ENCODE measurements at regions of chrX and their contacts with region 1.

Region 1: DNA sequence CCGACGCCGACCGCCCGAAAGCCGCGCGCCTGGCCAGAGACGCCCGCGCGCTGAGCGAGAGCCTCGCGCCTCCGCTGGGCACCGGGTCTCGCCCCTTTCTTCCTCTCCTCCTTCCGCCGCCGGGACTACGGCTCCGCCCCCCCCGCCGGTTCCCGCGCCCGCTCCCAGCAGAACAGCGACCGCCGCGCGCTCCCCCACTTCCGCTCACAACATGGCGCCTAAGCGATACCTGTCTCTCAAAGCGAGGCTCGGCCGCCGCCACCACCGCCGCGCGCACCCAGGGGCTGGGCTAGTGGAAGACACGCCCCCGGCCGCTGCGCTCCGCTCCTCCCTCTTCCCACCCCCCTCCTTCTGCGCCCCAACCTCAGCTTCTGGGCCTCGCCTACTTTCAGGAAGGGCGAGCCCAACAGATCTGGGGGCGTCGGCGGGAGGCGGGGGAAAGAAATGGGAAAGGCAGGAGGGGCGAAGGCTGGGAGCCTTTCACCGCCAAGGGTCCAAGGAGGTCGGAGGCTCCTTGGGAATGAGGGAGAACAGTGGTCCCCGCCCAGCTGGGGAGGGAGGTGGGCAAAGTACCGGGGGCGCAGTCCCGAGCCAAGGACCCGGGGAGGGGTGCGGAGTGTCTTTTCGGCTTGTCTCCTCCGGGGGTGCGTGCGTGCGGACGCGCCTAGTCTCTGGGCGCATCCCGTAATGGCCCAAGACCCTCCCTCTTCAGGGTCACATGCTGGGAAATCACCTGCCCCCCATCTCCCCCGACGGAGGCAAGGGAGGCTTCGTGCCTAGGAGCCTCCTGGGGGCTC is at the start of gene RPS6KA3:
- DNase-seq: peak; percentile 83 to 91 (median 88)
- ATAC-seq: peak; percentile 93
- H3K4me3 ChIP-seq: peak within 1 kb of the TSS; percentile 84
- H3K4me3 Mint-ChIP-seq: peak within 1 kb of the TSS; percentile 89 to 98 (median 95)
- H3K27ac ChIP-seq: peak within 1 kb of the TSS; percentile 77
- H3K27ac Mint-ChIP-seq: peak within 1 kb of the TSS; percentile 89 to 95 (median 91)
- H3K4me1 ChIP-seq: peaks cover 0 to 5% of the 10 kb centered on the region in 2 donors
- H3K4me1 Mint-ChIP-seq: peaks cover 0 to 27% (median 20%) of the 10 kb centered on the region in 7 donors
- H3K27me3 ChIP-seq: no peaks in the 10 kb centered on the region
- H3K27me3 Mint-ChIP-seq: peaks cover 0 to 21% (median 0%) of the 10 kb centered on the region in 5 donors
- total RNA-seq, gene RPS6KA3: 59.9 to 77.9 (median 72.6) TPM

Region 2: DNA sequence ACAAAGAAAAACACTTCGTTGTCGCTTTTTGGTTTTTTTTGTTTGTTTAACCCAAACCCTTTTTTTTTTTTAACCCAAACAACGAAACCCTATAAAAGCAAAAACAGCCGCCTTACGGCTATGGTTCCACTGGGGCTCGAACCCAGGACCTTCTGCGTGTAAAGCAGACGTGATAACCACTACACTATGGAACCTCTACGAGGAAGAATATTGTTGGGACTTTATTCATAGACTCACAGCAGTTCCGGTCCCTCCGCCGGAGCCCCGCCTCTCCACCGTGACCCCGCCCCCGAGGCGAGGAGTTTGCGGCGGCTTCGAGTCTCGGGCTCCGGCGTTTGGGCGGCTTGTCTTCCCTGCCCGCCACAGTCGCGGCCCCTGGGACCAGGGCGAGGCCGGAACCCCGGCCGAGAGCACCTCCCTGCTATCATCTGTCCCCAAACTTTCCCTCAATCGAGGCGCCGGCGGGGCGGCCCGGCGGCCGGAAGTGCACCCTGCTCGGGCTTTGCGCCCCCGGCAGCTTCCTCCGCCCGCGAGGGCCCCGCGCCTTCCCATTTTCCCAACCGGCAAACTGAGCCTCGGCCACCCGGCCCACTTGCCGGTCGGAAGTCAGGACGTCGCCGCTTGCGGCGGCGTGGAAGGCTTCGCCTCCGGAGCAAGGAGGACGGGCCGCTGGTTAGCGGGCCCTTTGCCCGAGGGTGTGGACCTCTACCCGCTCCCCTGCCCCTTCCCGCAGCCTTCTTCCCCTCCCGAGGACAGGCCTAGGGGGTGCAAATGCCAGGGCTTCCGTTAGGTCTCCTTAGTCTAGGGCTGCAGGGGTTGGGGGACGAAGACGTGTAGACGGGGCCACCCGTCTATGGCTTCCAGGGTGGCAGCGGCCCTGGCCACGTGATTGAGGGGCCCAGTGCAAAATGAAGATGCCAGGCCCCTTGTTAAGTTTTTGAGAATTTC is 1591.9 kb before region 1 on chrX:
- CTCF ChIA-PET with region 1: no interaction called
- POLR2A ChIA-PET with region 1: no interaction called
- intact Hi-C with region 1: loop called in 1 of 2 experiments (anchors 10 kb)
- DNase-seq: peak; percentile 76 to 89 (median 87)
- ATAC-seq: peak; percentile 96
- H3K4me3 ChIP-seq: peak overlapping the region; percentile 63
- H3K4me3 Mint-ChIP-seq: peak overlapping the region; percentile 74 to 87 (median 80)
- H3K27ac ChIP-seq: peak overlapping the region; percentile 82
- H3K27ac Mint-ChIP-seq: peak overlapping the region; percentile 71 to 95 (median 85)
- H3K4me1 ChIP-seq: no peaks in the 10 kb centered on the region
- H3K4me1 Mint-ChIP-seq: peaks cover 0 to 15% (median 8%) of the 10 kb centered on the region in 7 donors
- H3K27me3 ChIP-seq: no peaks in the 10 kb centered on the region
- H3K27me3 Mint-ChIP-seq: no peaks in the 10 kb centered on the region

Region 3: DNA sequence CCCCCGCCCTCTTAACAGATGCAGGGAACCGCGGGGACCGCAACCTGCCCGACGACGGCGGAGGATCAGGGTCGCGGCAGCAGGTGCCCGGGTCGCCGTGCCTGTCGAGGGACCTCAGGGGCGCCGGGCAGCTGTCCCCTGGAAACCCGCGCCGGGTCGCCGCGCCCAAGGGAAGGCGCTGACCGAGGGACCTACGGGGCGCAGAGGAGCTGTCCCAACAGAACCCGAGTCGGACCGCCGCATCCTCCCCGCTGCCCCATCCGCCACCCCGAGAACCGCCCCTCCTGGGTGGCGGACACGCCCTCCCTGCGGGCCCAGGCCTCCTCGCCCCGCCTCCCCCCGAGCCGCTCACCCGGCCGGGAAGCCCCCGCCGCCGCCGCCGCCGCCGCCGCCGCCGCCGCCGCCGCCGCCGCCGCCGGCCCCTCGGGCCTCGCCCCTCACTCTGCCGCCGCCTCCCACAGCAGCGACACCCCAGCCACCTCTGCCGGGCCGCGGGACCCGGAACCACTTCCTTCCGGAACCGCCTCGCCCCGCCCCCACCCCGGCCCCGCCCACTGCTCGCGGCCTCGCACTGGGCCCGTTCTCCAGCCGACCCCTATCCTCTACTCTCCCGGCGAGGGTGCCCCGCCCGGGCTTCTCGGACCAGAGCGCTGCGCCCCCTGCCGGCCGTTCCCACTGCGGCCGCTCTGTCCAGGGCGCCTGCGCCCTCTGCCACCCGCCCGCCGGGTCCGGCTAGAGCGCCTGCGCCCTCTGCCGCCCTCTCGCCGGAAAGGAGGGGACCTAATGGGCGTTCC is 276.3 kb before region 1 on chrX and contains the start of gene BCLAF3:
- CTCF ChIA-PET with region 1: no interaction called
- POLR2A ChIA-PET with region 1: no interaction called
- intact Hi-C with region 1: loop called (anchors 2 to 5 kb)
- DNase-seq: peak; percentile 64 to 91 (median 71)
- ATAC-seq: peak; percentile 94
- H3K4me3 ChIP-seq: peak within 1 kb of the TSS; percentile 51
- H3K4me3 Mint-ChIP-seq: peak within 1 kb of the TSS; percentile 82 to 96 (median 90)
- H3K27ac ChIP-seq: peak within 1 kb of the TSS; percentile 71
- H3K27ac Mint-ChIP-seq: peak within 1 kb of the TSS; percentile 79 to 98 (median 92)
- H3K4me1 ChIP-seq: no peaks in the 10 kb centered on the region
- H3K4me1 Mint-ChIP-seq: peaks cover 7 to 30% (median 19%) of the 10 kb centered on the region in 7 donors
- H3K27me3 ChIP-seq: no peaks in the 10 kb centered on the region
- H3K27me3 Mint-ChIP-seq: no peaks in the 10 kb centered on the region
- total RNA-seq, gene BCLAF3: 6.2 to 14.1 (median 11.7) TPM

Region 4: DNA sequence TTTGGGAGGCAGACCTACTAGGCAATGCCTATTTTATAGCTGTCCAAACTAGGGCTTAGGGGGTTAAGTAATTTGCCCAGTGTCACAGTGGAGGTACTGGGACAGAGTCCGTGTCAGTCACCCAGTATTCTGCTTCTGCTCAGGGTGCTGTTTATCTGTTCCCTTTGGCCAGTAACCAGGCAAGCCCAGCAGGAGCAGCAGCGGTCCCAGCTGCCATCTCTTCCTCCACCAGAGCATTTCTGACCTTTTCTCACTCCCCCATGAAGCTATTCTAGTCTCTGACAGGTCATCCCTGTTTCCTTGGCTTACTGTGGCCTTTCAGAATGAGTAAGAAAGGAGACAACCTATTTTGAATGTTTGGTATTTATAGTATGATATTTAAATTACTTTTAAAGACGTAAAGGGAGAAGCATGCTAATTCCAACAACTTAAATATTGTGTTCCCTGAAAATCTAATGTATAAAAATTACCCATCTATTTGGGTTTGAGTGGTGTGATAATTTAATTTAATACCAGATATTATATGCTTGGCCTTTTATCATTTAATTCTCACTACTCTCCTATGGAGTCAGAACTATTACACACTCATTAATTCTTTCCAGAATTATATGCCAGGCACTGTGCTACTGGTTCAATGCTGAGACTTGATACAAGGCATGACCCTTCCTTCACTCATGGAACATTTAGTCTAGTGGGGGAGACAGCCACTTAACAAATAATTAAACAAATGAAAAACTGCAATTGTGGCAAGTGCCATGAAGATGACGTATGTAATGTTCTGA is 60.9 kb before region 1 on chrX:
- CTCF ChIA-PET with region 1: no interaction called
- POLR2A ChIA-PET with region 1: no interaction called
- intact Hi-C with region 1: no loop called
- DNase-seq: no peak
- ATAC-seq: no peak
- H3K4me3 ChIP-seq: no peak overlapping the region
- H3K4me3 Mint-ChIP-seq: peak overlapping the region in 1 of 10 donors; percentile 7
- H3K27ac ChIP-seq: no peak overlapping the region
- H3K27ac Mint-ChIP-seq: peak overlapping the region in 4 of 9 donors; percentile 36 to 88 (median 56)
- H3K4me1 ChIP-seq: peaks cover 4 to 13% of the 10 kb centered on the region in 2 donors
- H3K4me1 Mint-ChIP-seq: peaks cover 13 to 55% (median 53%) of the 10 kb centered on the region in 7 donors
- H3K27me3 ChIP-seq: no peaks in the 10 kb centered on the region
- H3K27me3 Mint-ChIP-seq: no peaks in the 10 kb centered on the region

Region 5: DNA sequence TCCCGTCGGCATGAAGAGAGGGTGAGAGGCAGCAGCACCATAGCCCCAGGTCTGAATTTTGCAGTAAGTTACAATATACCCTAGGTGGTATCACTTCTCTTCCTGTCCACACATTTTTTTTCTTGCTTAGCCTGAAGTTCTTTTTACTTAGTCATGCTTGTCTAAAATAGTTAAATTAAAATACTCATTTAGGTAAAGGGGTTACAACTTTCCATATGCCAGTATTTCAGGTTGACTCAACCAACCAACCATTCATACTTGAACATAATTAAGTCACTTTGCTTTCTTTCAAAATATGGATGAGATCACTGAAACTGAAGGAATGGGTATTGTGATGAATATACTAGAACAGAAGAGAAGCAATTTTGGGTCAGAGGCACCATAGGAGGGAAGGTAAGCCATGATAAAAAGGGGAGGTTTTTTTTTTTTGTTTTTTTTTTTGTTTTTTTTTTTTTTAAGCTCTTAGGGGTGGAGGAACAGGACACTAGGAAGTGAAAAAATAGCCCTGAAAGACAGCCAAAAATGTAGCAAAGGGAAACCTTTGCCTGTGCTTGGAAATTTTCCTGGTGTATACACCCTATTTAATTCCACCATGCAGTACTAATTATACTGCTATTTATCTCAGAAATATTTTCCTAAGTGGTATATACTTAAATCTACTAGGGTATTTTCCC is 42.1 kb before region 1 on chrX:
- CTCF ChIA-PET with region 1: no interaction called
- POLR2A ChIA-PET with region 1: no interaction called
- intact Hi-C with region 1: no loop called
- DNase-seq: no peak
- ATAC-seq: no peak
- H3K4me3 ChIP-seq: no peak overlapping the region
- H3K4me3 Mint-ChIP-seq: peak overlapping the region in 1 of 10 donors; percentile 14
- H3K27ac ChIP-seq: no peak overlapping the region
- H3K27ac Mint-ChIP-seq: peak overlapping the region in 6 of 9 donors; percentile 19 to 76 (median 42)
- H3K4me1 ChIP-seq: no peaks in the 10 kb centered on the region
- H3K4me1 Mint-ChIP-seq: peaks cover 10 to 78% (median 48%) of the 10 kb centered on the region in 7 donors
- H3K27me3 ChIP-seq: no peaks in the 10 kb centered on the region
- H3K27me3 Mint-ChIP-seq: no peaks in the 10 kb centered on the region

Region 6: DNA sequence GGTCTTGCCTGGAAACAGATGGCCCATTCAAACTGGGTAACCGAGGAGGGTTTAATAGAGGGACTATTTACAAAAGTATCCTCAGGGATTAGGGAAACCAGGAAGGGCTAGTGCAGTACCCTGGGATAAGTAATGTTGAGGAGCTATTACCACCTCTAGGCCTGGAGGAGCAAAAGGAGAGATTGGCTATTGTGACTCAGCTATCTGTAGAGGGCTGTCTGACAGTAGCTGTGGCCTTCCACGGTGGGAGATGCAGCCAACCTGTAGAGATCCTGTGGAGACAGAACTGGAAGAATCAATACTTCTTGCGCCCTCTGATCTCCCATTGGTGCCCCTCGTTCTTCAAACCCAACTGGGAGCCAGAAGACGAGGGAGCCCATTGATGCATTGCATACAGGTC is 33.8 kb after region 1 on chrX:
- CTCF ChIA-PET with region 1: no interaction called
- POLR2A ChIA-PET with region 1: no interaction called
- intact Hi-C with region 1: loop called in 1 of 2 experiments (anchors 5 kb)
- DNase-seq: no peak
- ATAC-seq: no peak
- H3K4me3 ChIP-seq: no peak overlapping the region
- H3K4me3 Mint-ChIP-seq: no peak overlapping the region
- H3K27ac ChIP-seq: no peak overlapping the region
- H3K27ac Mint-ChIP-seq: no peak overlapping the region
- H3K4me1 ChIP-seq: no peaks in the 10 kb centered on the region
- H3K4me1 Mint-ChIP-seq: peaks cover 0 to 12% (median 8%) of the 10 kb centered on the region in 7 donors
- H3K27me3 ChIP-seq: no peaks in the 10 kb centered on the region
- H3K27me3 Mint-ChIP-seq: peaks cover 0 to 23% (median 0%) of the 10 kb centered on the region in 5 donors

Region 7: DNA sequence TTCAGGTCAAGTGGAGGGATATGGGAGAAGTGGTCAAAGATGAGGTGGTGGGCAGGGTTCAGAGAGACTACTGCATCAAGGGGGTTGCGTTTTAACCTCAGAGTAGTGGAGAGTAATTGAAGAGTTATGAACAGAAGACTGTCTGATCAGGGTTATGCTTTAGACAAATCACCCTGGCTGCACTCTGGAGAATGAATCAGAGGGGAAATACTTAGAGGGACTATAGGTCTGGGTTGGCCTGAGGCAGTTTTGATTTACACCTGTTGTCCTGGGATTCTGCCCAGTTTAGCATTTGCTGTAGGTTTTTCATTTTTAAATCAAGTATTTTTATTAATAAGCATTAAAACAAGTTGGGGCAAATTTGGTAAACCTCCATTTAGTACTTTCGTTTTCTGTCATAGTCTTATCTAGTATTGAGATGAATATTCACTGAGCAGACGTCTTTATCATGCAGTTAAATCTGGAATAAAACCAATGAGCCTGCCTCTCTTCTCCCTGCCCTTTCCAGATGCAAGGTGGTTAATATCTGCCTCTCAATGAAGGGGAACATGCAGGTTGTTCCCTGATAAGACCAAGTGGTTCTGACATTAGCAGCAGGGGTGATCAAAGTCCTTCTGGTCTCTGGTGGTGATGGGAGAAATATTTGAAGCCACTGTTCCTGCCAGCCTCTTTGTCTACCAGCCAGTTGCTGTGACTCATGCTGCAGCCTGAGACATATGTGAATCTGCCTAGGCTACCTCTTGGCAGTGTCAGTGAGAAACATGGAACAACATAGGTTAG is 115.7 kb after region 1 on chrX:
- CTCF ChIA-PET with region 1: no interaction called
- POLR2A ChIA-PET with region 1: no interaction called
- intact Hi-C with region 1: loop called in 1 of 2 experiments (anchors 5 kb)
- DNase-seq: no peak
- ATAC-seq: no peak
- H3K4me3 ChIP-seq: no peak overlapping the region
- H3K4me3 Mint-ChIP-seq: peak overlapping the region in 8 of 10 donors; percentile 19 to 74 (median 45)
- H3K27ac ChIP-seq: no peak overlapping the region
- H3K27ac Mint-ChIP-seq: peak overlapping the region in 2 of 9 donors; percentile 6 to 42
- H3K4me1 ChIP-seq: peaks cover 0 to 3% of the 10 kb centered on the region in 2 donors
- H3K4me1 Mint-ChIP-seq: peaks cover 5 to 18% (median 10%) of the 10 kb centered on the region in 7 donors
- H3K27me3 ChIP-seq: no peaks in the 10 kb centered on the region
- H3K27me3 Mint-ChIP-seq: no peaks in the 10 kb centered on the region

Region 8: GRCh38 chrX:20515841-20516461 is 248.9 kb after region 1 on chrX:
- CTCF ChIA-PET with region 1: no interaction called
- POLR2A ChIA-PET with region 1: no interaction called
- intact Hi-C with region 1: loop called in 1 of 2 experiments (anchors 5 kb)
- DNase-seq: peak in 1 of 9 donors; percentile 27
- ATAC-seq: peak; percentile 85
- H3K4me3 ChIP-seq: no peak overlapping the region
- H3K4me3 Mint-ChIP-seq: peak overlapping the region in 1 of 10 donors; percentile 65
- H3K27ac ChIP-seq: no peak overlapping the region
- H3K27ac Mint-ChIP-seq: peak overlapping the region in 1 of 9 donors; percentile 89
- H3K4me1 ChIP-seq: no peaks in the 10 kb centered on the region
- H3K4me1 Mint-ChIP-seq: peaks cover 0 to 39% (median 0%) of the 10 kb centered on the region in 7 donors
- H3K27me3 ChIP-seq: no peaks in the 10 kb centered on the region
- H3K27me3 Mint-ChIP-seq: peaks cover 0 to 23% (median 0%) of the 10 kb centered on the region in 5 donors

Region 9: DNA sequence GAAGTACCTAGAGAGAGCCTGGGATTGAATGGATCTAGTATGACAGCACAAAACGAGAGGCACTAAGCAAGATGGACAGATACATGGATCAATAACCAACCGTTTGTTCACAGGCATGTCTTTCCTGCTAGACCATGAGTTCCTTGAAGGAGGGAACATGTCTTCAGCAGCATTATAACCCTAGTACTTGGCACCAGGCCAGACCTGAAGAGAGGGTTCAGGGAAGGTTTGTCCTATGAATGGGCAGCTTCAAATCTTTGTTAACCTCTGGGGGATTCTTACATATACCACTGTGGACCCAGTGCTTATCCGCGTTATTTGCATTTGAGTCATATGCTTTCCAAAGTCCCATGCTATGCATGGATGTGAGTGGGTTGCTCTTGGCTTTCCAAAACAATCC is 547.1 kb after region 1 on chrX:
- CTCF ChIA-PET with region 1: no interaction called
- POLR2A ChIA-PET with region 1: no interaction called
- intact Hi-C with region 1: no loop called
- DNase-seq: no peak
- ATAC-seq: no peak
- H3K4me3 ChIP-seq: no peak overlapping the region
- H3K4me3 Mint-ChIP-seq: no peak overlapping the region
- H3K27ac ChIP-seq: no peak overlapping the region
- H3K27ac Mint-ChIP-seq: no peak overlapping the region
- H3K4me1 ChIP-seq: no peaks in the 10 kb centered on the region
- H3K4me1 Mint-ChIP-seq: no peaks in the 10 kb centered on the region
- H3K27me3 ChIP-seq: no peaks in the 10 kb centered on the region
- H3K27me3 Mint-ChIP-seq: peaks cover 0 to 11% (median 0%) of the 10 kb centered on the region in 5 donors

Region 10: GRCh38 chrX:20829665-20830491 is 562.9 kb after region 1 on chrX:
- CTCF ChIA-PET with region 1: no interaction called
- POLR2A ChIA-PET with region 1: no interaction called
- intact Hi-C with region 1: no loop called
- DNase-seq: no peak
- ATAC-seq: no peak
- H3K4me3 ChIP-seq: no peak overlapping the region
- H3K4me3 Mint-ChIP-seq: no peak overlapping the region
- H3K27ac ChIP-seq: no peak overlapping the region
- H3K27ac Mint-ChIP-seq: no peak overlapping the region
- H3K4me1 ChIP-seq: no peaks in the 10 kb centered on the region
- H3K4me1 Mint-ChIP-seq: no peaks in the 10 kb centered on the region
- H3K27me3 ChIP-seq: no peaks in the 10 kb centered on the region
- H3K27me3 Mint-ChIP-seq: no peaks in the 10 kb centered on the region

Region 11: GRCh38 chrX:21972721-21973120 is 1705.7 kb after region 1 on chrX:
- CTCF ChIA-PET with region 1: no interaction called
- POLR2A ChIA-PET with region 1: no interaction called
- intact Hi-C with region 1: loop called in 1 of 2 experiments (anchors 10 kb)
- DNase-seq: peak in 7 of 9 donors; percentile 11 to 48 (median 31)
- ATAC-seq: peak; percentile 83
- H3K4me3 ChIP-seq: no peak overlapping the region
- H3K4me3 Mint-ChIP-seq: peak overlapping the region in 9 of 10 donors; percentile 30 to 82 (median 61)
- H3K27ac ChIP-seq: no peak overlapping the region
- H3K27ac Mint-ChIP-seq: peak overlapping the region; percentile 82 to 98 (median 94)
- H3K4me1 ChIP-seq: peaks cover 10% of the 10 kb centered on the region in 2 donors
- H3K4me1 Mint-ChIP-seq: peaks cover 0 to 37% (median 26%) of the 10 kb centered on the region in 7 donors
- H3K27me3 ChIP-seq: no peaks in the 10 kb centered on the region
- H3K27me3 Mint-ChIP-seq: no peaks in the 10 kb centered on the region